ENCODE measurements at regions of chr2 and their contacts with region 1.

Region 1: DNA sequence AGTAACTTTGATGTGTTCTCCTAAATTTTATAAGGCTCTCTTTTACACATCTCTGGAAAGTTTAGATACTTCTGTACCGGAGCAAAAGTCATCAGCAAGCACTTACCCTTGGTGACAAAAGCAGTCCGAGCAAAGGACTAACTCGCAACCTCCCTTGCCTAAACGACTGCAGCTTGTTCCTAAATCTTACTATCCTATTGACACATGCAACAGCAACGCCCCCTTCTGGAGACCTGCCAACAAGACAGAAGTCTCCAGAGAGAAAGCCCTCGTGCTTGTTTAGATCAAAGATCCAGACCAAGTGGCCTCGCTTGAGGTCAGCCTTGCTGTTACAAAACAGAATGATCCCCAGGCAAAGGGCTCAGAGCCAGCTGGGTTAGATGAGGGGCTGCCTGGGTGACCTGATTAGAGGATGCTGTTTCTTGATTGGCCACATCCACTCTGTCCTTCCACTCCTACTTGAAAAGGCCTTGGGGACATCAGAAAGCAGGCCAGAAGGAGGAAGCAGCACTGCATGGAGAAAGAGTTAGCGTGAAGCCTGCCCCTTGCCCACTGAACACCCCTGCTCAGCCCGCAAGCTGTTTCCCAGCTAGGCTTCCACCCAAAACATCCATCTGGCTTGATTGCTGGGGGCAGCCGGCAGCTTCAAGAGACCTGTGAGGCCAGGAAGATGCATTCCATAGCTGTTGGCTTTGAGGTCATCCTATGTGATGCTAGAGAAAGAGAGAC is 94.3 kb downstream of the HNRNPLL start:
- DNase-seq: peak; percentile 94
- ATAC-seq: peak; percentile 86
- H3K4me3 Mint-ChIP-seq: no peak overlapping the region
- H3K27ac Mint-ChIP-seq: no peak overlapping the region
- H3K4me1 Mint-ChIP-seq: peaks cover 3% of the 10 kb centered on the region
- H3K27me3 Mint-ChIP-seq: peaks cover 7% of the 10 kb centered on the region
- CTCF ChIP-seq: peak; percentile 86

Region 2: DNA sequence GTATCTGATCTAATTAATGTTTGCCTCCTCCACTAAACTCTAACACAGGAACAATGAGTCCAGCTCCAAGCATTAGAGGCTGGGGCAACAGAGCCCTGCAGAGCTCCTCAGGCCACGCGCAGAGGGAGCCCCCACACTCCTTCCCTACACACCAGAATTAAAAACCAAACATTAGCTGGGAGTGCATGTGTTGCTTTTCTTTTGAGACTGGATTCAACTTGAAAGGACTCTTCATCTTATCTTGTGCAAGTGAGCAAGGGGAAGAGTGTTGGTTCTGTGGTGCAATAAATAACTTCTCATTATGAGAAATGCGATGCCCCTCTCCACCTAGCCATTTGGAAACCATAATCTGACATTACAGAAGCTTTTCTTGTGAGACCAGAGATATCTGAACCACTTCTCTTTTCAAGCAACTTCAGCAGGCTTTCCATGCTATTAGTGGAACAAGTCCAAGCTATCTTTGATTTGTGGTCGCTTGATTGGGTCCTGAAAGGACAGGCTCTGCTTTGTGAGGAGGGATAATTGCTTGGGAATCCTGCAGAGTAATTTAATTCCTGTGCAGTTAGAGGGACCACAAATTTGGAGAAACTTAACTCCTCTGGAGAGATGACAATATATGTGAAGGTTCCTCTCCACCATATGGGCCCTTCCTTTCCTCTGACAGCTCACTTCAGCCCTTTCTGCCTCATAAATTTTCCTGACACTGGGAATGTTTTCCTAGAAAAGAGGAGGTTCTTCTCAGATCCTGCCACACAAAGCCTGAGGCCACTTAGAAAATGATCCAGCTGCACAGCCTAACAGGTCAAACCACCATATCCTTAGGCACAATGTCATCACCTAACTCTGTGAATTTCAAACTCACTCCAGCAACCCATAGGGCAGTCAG is 243.8 kb before region 1 on chr2:
- CTCF ChIA-PET with region 1: interaction called, 10 read pairs
- POLR2A ChIA-PET with region 1: no interaction called
- intact Hi-C with region 1: no loop called
- DNase-seq: no peak
- ATAC-seq: no peak
- H3K4me3 Mint-ChIP-seq: no peak overlapping the region
- H3K27ac Mint-ChIP-seq: no peak overlapping the region
- H3K4me1 Mint-ChIP-seq: peaks cover 23% of the 10 kb centered on the region
- H3K27me3 Mint-ChIP-seq: peaks cover 9% of the 10 kb centered on the region
- CTCF ChIP-seq: no peak

Region 3: GRCh38 chr2:38293152-38293865 is 215.2 kb before region 1 on chr2:
- CTCF ChIA-PET with region 1: interaction called, 10 read pairs
- POLR2A ChIA-PET with region 1: no interaction called
- intact Hi-C with region 1: no loop called
- DNase-seq: no peak
- ATAC-seq: no peak
- H3K4me3 Mint-ChIP-seq: no peak overlapping the region
- H3K27ac Mint-ChIP-seq: no peak overlapping the region
- H3K4me1 Mint-ChIP-seq: no peaks in the 10 kb centered on the region
- H3K27me3 Mint-ChIP-seq: peaks cover 3% of the 10 kb centered on the region
- CTCF ChIP-seq: no peak

Region 4: DNA sequence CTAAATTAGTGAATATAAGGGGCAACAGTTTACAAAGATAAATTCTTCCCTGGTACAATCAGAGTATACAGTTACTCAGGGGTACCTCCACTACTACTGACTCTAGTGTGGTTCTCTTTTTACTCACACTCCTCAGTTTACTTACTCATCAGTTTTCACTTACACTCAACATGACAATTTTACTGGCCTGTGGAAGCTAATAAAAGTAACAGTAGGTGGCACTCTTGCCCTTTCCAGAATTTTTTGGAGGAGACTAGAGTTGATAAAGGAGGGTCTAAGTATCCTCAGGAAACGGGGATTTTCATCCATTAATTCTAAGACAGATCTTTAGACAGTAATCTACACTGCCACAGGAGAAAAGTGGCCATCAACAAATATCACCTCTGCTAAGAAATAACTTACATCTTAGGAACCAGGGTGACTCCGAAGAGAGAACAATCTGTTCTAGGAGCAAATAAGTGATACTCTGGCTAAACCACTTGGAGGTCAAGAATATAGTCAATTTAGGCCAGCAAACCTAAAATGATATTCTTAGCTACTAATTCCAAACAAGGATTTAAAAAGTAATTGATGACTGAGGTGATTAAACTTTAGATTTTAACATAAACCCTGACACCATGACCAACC is 192.7 kb before region 1 on chr2:
- CTCF ChIA-PET with region 1: interaction called, 119 read pairs
- POLR2A ChIA-PET with region 1: interaction called, 6 read pairs
- intact Hi-C with region 1: loop called (anchors 1 kb)
- DNase-seq: peak; percentile 7
- ATAC-seq: peak; percentile 95
- H3K4me3 Mint-ChIP-seq: no peak overlapping the region
- H3K27ac Mint-ChIP-seq: no peak overlapping the region
- H3K4me1 Mint-ChIP-seq: peaks cover 7% of the 10 kb centered on the region
- H3K27me3 Mint-ChIP-seq: no peaks in the 10 kb centered on the region
- CTCF ChIP-seq: peak; percentile 77

Region 5: GRCh38 chr2:38377050-38377828 is 131.2 kb before region 1 on chr2 and contains the start of gene ATL2:
- CTCF ChIA-PET with region 1: interaction called, 22 read pairs
- POLR2A ChIA-PET with region 1: no interaction called
- intact Hi-C with region 1: no loop called
- DNase-seq: peak; percentile 98
- ATAC-seq: peak; percentile 87
- H3K4me3 Mint-ChIP-seq: peak within 1 kb of the TSS; percentile 89
- H3K27ac Mint-ChIP-seq: peak within 1 kb of the TSS; percentile 87
- H3K4me1 Mint-ChIP-seq: peaks cover 60% of the 10 kb centered on the region
- H3K27me3 Mint-ChIP-seq: no peaks in the 10 kb centered on the region
- CTCF ChIP-seq: no peak
- total RNA-seq, gene ATL2: 52.8 to 54.5 TPM

Region 6: GRCh38 chr2:38498045-38498481 is 10.4 kb before region 1 on chr2:
- CTCF ChIA-PET with region 1: interaction called, 12 read pairs
- POLR2A ChIA-PET with region 1: no interaction called
- intact Hi-C with region 1: no loop called
- DNase-seq: no peak
- ATAC-seq: no peak
- H3K4me3 Mint-ChIP-seq: no peak overlapping the region
- H3K27ac Mint-ChIP-seq: no peak overlapping the region
- H3K4me1 Mint-ChIP-seq: peaks cover 5% of the 10 kb centered on the region
- H3K27me3 Mint-ChIP-seq: peaks cover 3% of the 10 kb centered on the region
- CTCF ChIP-seq: no peak